GM12878 (cell line): ENCODE measurements at regions of chr11 and their contacts with region 1.

Region 1: DNA sequence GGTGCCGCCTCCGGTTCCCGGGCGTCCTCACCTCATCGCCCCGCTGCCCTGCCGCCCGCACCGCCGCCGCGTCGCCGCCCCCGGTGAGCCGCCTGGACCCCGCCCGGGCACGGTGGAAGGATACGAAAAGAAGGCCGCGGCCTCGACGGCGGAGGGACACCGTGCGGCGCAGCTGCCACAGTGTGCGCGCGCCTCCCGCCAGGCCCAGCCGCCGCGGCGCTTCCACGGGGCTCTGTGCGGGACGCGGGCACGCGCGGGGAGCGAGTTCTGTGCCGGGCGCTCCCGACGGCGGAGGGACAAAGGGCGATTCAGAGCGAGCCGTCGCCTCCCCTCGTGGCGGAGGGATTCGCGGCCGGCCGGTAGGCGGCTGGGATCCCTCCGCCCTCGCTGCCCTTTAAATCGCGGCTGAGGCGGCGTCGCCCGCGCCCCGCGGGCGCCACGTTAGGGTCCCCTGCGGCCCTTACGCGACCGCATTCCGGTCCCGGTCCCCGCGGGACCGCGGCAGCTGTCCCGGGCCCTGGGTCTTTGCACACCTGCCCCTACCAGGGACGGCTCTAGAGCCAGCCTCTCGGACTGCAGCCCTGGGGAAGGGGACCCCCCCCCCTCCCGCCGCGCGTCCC is 569 bp upstream of the KMT5B start:
- DNase-seq: no peak
- ATAC-seq: peak; percentile 60
- H3K4me3 ChIP-seq: peak overlapping the region; percentile 93
- H3K27ac ChIP-seq: peak overlapping the region; percentile 91
- H3K4me1 ChIP-seq: peaks cover 11% of the 10 kb centered on the region
- H3K27me3 ChIP-seq: no peaks in the 10 kb centered on the region
- CTCF ChIP-seq: no peak
- EP300 ChIP-seq: no peak
- POLR2A ChIP-seq: peak; percentile 99
- RAD21 ChIP-seq: no peak

Region 2: DNA sequence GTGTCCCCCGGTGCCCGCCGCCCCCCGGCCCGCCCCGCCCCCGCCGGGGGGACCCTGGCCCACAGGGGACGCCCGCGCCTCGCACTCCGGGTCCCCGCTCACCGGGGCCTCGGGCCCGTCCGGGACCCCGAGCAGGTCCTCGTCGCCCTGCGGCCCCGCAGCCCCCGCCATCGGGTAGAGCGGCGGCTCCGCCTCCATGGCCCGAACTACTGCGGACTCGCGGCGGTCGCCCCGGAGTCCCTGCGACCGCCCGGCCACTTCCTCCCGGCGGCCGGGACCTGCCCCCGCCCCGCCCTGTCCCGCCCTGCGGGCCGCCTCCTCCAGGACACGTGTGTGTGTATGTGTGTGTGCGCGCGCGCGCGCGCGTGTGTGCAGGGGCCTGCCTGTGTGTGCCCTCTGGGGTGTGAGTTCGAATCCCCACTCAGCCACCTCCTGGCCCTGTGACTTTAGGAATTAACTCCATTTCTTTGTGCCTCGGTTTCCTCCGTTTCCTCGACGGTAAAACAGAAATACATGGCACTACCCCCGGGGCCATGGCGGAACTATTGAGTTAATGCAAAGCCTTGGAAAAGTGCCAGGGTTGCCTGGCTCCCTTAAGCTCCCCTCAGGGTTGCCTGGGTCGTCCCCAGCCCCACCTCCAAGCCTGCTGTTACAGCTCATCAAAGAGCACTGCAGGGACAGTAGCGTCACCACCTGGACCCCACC is 209.7 kb before region 1 on chr11 and contains the start of gene UNC93B1:
- CTCF ChIA-PET with region 1: interaction called, 25 read pairs
- POLR2A ChIA-PET with region 1: no interaction called
- RAD21 ChIA-PET with region 1: interaction called, 3 read pairs
- SMC1A ChIA-PET with region 1: interaction called, 6 read pairs
- in situ Hi-C with region 1: loop called (anchors 5 kb)
- intact Hi-C with region 1: loop called (anchors 5 kb)
- DNase-seq: peak; percentile 57
- ATAC-seq: peak; percentile 88
- H3K4me3 ChIP-seq: peak within 1 kb of the TSS; percentile 92
- H3K27ac ChIP-seq: peak within 1 kb of the TSS; percentile 78
- H3K4me1 ChIP-seq: peaks cover 36% of the 10 kb centered on the region
- H3K27me3 ChIP-seq: no peaks in the 10 kb centered on the region
- CTCF ChIP-seq: no peak
- EP300 ChIP-seq: no peak
- POLR2A ChIP-seq: peak; percentile 87
- RAD21 ChIP-seq: no peak
- polyA plus RNA-seq, gene UNC93B1: 1.3 to 3.4 TPM

Region 3: DNA sequence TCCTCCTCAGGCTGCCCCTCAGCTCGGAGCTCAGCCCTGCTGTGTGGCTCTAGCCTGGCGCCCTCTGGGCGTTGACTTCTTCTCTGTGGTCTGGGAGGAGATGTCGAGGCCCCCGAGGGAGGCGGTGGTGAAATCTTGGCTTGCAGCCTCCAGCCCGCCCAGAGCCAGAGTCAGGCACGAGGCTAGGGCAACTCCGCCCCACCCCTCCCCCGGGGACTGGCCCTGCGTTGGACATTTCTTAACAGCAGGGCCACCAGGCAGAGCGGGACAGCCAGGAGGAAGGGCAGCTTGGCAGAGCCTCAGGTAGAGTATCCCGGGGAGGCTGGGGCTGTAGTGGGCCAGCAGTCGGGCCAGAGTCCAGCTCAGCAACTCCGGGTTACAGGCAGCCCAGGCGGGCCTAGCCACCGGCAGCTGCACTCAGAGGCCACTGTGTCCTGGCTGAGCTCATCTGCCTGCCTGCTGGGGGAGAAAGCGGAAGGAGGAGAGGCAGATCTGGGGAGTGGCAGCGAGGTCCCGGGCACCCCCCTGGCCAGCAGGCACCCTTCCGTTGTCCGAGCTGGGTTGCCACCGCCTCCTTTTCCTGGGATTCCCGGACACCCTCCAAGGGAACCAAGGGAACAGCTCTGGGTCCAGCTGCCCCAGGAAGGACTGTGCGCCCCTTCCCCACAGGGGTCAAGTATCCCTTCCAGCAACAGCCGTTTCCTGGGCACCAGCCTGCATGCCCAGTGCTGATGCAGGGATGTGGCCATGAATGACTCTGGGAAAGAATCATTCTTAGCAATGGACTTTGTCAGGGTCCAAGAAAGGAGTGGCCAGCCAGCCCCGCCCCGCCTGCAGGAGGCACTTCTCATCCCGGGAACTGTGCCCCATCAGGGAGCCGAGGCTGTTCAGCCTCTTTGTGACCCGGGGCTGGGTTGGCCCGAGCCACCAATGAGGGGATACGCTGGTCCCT is 203.3 kb before region 1 on chr11 and contains the start of gene ALDH3B1:
- CTCF ChIA-PET with region 1: interaction called, 25 read pairs
- POLR2A ChIA-PET with region 1: interaction called, 3 read pairs
- RAD21 ChIA-PET with region 1: interaction called, 3 read pairs
- SMC1A ChIA-PET with region 1: interaction called, 6 read pairs
- in situ Hi-C with region 1: loop called (anchors 5 kb)
- intact Hi-C with region 1: no loop called
- DNase-seq: no peak
- ATAC-seq: peak; percentile 74
- H3K4me3 ChIP-seq: no peak within 1 kb of the TSS
- H3K27ac ChIP-seq: no peak within 1 kb of the TSS
- H3K4me1 ChIP-seq: peaks cover 23% of the 10 kb centered on the region
- H3K27me3 ChIP-seq: no peaks in the 10 kb centered on the region
- CTCF ChIP-seq: no peak
- EP300 ChIP-seq: no peak
- POLR2A ChIP-seq: no peak
- RAD21 ChIP-seq: no peak
- polyA plus RNA-seq, gene ALDH3B1: 0.03 to 0.13 TPM

Region 4: DNA sequence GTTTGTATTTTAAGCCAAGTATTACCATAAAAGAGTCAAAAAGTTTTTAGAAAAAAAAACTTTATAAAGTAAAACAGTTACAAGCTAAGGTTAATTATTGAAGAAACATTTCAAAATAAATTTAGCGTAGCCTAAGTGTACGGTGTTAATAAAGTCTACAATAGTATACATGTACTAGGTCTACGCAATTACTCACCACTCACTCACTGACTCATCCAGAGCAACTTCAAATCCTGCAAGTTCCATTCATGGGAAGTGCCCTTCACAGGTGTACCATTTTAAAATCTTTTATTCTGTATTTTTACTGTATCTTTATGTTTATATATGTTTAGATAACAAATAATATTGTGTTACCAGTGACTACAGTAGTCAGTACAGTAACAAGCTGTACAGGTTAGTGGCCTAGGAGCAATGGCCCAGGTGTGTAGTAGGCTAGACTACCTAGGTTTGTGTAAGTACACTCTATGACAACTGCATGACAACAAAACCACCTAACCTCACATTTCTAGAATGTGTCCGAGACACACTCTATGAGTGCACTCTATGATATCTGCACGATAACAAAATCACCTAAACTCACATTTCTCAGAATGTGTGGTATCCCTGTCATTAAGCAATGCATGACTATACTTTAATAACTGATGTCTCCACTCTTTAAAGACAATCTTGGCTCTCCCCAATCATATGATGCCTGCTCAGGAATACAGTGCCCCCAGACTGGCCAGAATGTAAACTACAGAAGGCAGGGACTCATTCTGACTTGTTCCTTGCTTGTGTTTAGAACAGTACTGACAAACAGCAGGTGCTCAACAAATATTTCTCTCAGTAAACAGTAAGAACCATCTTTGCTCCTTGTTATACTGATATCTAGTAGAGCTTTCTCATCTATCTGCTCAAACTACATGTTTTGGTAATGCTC is 21.7 kb before region 1 on chr11:
- CTCF ChIA-PET with region 1: interaction called, 6 read pairs
- POLR2A ChIA-PET with region 1: no interaction called
- RAD21 ChIA-PET with region 1: no interaction called
- SMC1A ChIA-PET with region 1: interaction called, 11 read pairs
- in situ Hi-C with region 1: no loop called
- intact Hi-C with region 1: no loop called
- DNase-seq: no peak
- ATAC-seq: peak; percentile 19; the same call in 2 of the 3 replicates
- H3K4me3 ChIP-seq: no peak overlapping the region
- H3K27ac ChIP-seq: no peak overlapping the region
- H3K4me1 ChIP-seq: peaks cover 8% of the 10 kb centered on the region; the same call in 1 of the 2 replicates
- H3K27me3 ChIP-seq: no peaks in the 10 kb centered on the region
- CTCF ChIP-seq: no peak
- EP300 ChIP-seq: no peak
- POLR2A ChIP-seq: no peak
- RAD21 ChIP-seq: no peak

Region 5: DNA sequence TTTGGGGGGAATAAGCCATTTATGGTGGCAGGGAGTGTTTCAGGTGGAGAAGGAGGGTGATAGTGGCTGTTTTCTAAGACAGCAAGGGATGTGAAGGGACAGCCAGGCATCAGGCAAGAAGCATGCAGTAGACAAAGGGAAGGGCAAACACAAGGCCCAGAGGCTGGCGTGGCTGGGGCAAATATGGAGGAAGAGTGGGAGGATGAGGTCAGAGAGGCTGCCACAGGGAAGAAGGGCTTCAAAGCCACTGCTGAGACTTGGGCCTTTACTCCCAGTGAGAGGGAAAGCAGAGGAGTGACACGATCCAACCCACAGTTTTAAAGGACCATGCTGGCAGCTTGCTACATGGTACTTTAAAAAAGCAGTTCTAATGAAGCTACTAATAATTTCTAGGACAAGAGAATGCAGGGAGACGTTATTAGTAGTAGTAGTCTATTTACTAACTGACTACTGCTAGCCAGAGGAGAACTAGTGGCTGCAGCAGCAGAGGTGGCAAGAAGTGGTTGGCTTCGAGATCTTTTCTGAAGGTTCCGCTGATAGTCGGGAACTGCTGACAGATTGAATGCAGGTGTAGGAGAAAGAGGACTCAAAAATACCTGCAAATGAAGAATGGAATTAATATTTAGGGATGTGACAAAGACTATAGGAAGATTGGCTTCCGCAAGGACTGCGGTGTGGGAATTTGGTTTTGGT is 14.2 kb before region 1 on chr11:
- CTCF ChIA-PET with region 1: interaction called, 18 read pairs
- POLR2A ChIA-PET with region 1: interaction called, 3 read pairs
- RAD21 ChIA-PET with region 1: no interaction called
- SMC1A ChIA-PET with region 1: interaction called, 6 read pairs
- in situ Hi-C with region 1: no loop called
- intact Hi-C with region 1: no loop called
- DNase-seq: no peak
- ATAC-seq: no peak
- H3K4me3 ChIP-seq: no peak overlapping the region
- H3K27ac ChIP-seq: no peak overlapping the region
- H3K4me1 ChIP-seq: peaks cover 11% of the 10 kb centered on the region
- H3K27me3 ChIP-seq: no peaks in the 10 kb centered on the region
- CTCF ChIP-seq: no peak
- EP300 ChIP-seq: no peak
- POLR2A ChIP-seq: no peak
- RAD21 ChIP-seq: no peak

Region 6: GRCh38 chr11:68257475-68258362 is 44.1 kb after region 1 on chr11:
- CTCF ChIA-PET with region 1: interaction called, 17 read pairs
- POLR2A ChIA-PET with region 1: no interaction called
- RAD21 ChIA-PET with region 1: no interaction called
- SMC1A ChIA-PET with region 1: interaction called, 5 read pairs
- in situ Hi-C with region 1: no loop called
- intact Hi-C with region 1: no loop called
- DNase-seq: no peak
- ATAC-seq: peak; percentile 99
- H3K4me3 ChIP-seq: no peak overlapping the region
- H3K27ac ChIP-seq: no peak overlapping the region
- H3K4me1 ChIP-seq: peaks cover 4% of the 10 kb centered on the region
- H3K27me3 ChIP-seq: no peaks in the 10 kb centered on the region; a peak in 1 of 4 replicates
- CTCF ChIP-seq: peak; percentile 74 to 78 (median 77)
- EP300 ChIP-seq: no peak
- POLR2A ChIP-seq: no peak; the same call in 1 of the 2 replicates
- RAD21 ChIP-seq: peak; percentile 97

Region 7: GRCh38 chr11:68369756-68370155 is 156.1 kb after region 1 on chr11:
- CTCF ChIA-PET with region 1: no interaction called
- POLR2A ChIA-PET with region 1: no interaction called
- RAD21 ChIA-PET with region 1: no interaction called
- SMC1A ChIA-PET with region 1: no interaction called
- in situ Hi-C with region 1: no loop called
- intact Hi-C with region 1: no loop called
- DNase-seq: no peak
- ATAC-seq: no peak
- H3K4me3 ChIP-seq: no peak overlapping the region
- H3K27ac ChIP-seq: peak overlapping the region; percentile 89
- H3K4me1 ChIP-seq: peaks cover 36% of the 10 kb centered on the region
- H3K27me3 ChIP-seq: no peaks in the 10 kb centered on the region
- CTCF ChIP-seq: no peak
- EP300 ChIP-seq: no peak
- POLR2A ChIP-seq: no peak
- RAD21 ChIP-seq: no peak

Region 8: DNA sequence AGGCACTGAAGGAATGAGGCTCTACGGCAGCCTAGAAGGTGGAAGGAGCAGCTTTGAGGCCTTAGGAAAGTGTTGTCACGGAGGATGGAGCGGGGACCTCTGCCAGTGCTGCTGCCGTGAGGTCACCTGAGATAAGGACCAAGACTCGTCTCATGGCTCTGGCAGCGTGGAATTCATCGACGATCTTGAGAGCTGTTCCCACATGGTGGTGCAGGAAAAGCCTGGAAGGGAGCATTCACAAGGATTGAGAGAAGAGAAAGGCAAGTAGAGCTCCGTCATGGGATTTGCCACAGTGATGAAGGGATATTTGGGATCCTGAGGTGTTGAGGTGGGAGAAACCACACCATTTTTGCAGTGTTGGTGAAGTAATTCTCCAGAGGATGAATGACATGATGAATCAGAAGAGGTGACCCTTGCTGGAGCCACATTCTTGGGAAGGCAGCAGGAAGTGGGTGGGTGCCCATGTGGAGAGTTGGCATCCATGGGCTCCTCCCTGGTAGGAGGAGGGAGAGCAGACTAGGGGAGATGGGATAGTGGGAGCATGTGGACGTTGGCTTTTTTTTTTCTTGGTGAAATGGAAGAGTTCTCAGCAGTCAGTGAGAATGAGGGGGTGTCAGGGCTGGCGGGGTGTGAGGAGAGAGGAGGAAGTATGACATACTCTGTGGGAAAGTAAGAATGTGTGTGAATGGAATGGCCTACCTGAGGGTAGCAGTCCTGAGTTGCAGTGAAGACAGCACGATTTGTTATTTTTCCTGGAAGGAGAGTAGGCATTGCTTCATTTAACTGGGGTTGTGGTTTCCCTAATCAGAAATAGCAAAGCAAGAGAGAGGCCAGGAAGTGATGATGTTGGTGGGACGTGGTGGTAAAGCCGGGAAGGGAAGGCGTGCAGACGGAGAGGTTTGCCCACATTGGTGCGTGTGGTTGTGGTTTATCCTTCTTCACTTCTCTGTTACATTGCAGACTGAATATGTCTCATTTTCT is 258.0 kb after region 1 on chr11:
- CTCF ChIA-PET with region 1: no interaction called
- POLR2A ChIA-PET with region 1: no interaction called
- RAD21 ChIA-PET with region 1: no interaction called
- SMC1A ChIA-PET with region 1: no interaction called
- in situ Hi-C with region 1: no loop called
- intact Hi-C with region 1: no loop called
- DNase-seq: peak; percentile 32
- ATAC-seq: peak; percentile 59
- H3K4me3 ChIP-seq: 0 out of 2 replicates have a peak overlapping the region, but pooled peaks have one; percentile 22
- H3K27ac ChIP-seq: peak overlapping the region; percentile 15; the same call in 1 of the 2 replicates
- H3K4me1 ChIP-seq: peaks cover 52% of the 10 kb centered on the region
- H3K27me3 ChIP-seq: no peaks in the 10 kb centered on the region
- CTCF ChIP-seq: no peak
- EP300 ChIP-seq: no peak
- POLR2A ChIP-seq: no peak
- RAD21 ChIP-seq: no peak

Region 9: GRCh38 chr11:68550485-68550817 is 336.8 kb after region 1 on chr11:
- CTCF ChIA-PET with region 1: no interaction called
- POLR2A ChIA-PET with region 1: no interaction called
- RAD21 ChIA-PET with region 1: no interaction called
- SMC1A ChIA-PET with region 1: no interaction called
- in situ Hi-C with region 1: no loop called
- intact Hi-C with region 1: no loop called
- DNase-seq: no peak
- ATAC-seq: no peak
- H3K4me3 ChIP-seq: no peak overlapping the region
- H3K27ac ChIP-seq: no peak overlapping the region; the same call in 1 of the 2 replicates
- H3K4me1 ChIP-seq: no peaks in the 10 kb centered on the region
- H3K27me3 ChIP-seq: no peaks in the 10 kb centered on the region
- CTCF ChIP-seq: no peak
- EP300 ChIP-seq: no peak
- POLR2A ChIP-seq: no peak
- RAD21 ChIP-seq: no peak